Sigmoid colon (tissue), 7 donors: ENCODE measurements at regions of chr4 and their contacts with region 1.

Region 1: GRCh38 chr4:105471566-105472176 is 2.2 kb downstream of the PPA2 start:
- DNase-seq: peak; percentile 82
- H3K4me3 ChIP-seq: peak overlapping the region in 3 of 4 donors; percentile 9 to 98 (median 78)
- H3K27ac ChIP-seq: peak overlapping the region; percentile 96 to 100 (median 99)
- H3K4me1 ChIP-seq: peaks cover 0 to 42% (median 24%) of the 10 kb centered on the region in 4 donors
- H3K27me3 ChIP-seq: no peaks in the 10 kb centered on the region
- CTCF ChIP-seq: peak; percentile 51 to 80 (median 70)
- EP300 ChIP-seq: no peak
- POLR2A ChIP-seq: no peak

Region 2: DNA sequence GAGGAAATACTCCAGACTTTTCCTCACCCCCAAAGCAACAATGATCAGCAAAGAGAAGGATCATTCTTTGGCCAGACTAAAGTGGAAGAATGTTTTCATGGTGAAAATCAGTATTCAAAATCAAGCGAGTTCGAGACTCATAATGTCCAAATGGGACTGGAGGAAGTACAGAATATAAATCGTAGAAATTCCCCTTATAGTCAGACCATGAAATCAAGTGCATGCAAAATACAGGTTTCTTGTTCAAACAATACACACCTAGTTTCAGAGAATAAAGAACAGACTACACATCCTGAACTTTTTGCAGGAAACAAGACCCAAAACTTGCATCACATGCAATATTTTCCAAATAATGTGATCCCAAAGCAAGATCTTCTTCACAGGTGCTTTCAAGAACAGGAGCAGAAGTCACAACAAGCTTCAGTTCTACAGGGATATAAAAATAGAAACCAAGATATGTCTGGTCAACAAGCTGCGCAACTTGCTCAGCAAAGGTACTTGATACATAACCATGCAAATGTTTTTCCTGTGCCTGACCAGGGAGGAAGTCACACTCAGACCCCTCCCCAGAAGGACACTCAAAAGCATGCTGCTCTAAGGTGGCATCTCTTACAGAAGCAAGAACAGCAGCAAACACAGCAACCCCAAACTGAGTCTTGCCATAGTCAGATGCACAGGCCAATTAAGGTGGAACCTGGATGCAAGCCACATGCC is 235.3 kb before region 1 on chr4:
- intact Hi-C with region 1: no loop called
- DNase-seq: no peak
- H3K4me3 ChIP-seq: no peak overlapping the region
- H3K27ac ChIP-seq: no peak overlapping the region
- H3K4me1 ChIP-seq: peaks cover 0 to 11% (median 8%) of the 10 kb centered on the region in 4 donors
- H3K27me3 ChIP-seq: no peaks in the 10 kb centered on the region
- CTCF ChIP-seq: no peak
- EP300 ChIP-seq: no peak
- POLR2A ChIP-seq: no peak

Region 3: DNA sequence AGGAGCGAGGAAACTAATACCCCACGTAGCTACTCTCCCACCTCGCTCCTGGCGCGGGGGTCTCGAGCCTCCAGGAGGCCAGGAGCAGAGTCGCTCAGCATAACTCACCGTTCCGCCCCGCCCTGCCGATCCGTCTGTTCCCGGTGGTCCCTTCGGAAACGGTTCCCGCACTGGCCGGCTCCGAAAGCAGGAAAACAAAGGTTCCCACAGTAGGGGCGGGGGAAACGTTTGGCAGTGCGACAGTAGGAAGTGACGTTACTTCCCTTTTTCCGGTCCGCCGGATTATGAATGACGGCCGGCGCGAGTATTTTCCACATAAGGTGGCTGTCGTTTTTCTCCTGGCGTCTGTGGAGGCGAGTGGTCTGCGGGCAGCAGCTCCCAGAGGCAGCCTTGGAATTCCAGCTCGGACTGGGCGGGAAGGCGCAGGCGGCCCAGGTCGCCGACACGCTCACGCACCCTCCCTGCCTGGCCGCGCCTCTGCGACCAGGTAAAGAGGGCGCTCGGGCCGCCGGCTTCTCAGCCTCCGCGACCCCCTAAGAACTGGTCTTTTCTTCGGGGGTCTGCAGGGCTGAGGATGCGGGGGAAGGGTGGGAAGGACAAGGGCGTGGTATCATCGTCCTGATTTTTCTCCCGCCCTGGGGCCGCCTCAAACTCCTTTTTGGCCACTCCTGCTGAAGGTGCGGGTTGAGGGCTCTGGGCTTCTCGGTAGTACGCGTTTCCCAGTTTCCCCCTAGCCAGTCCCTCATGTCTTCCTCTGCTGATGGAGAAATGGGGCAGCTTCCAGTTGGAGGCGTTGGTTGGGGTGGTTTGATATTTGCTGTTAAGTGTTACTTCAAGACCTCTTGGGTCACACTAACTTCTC is 237.1 kb after region 1 on chr4 and contains the starts of genes GSTCD and INTS12:
- intact Hi-C with region 1: loop called (anchors 5 kb)
- DNase-seq: peak; percentile 95
- H3K4me3 ChIP-seq: peak within 1 kb of the TSS; percentile 78 to 89 (median 84)
- H3K27ac ChIP-seq: peak within 1 kb of the TSS; percentile 84 to 95 (median 86)
- H3K4me1 ChIP-seq: peaks cover 2 to 23% (median 19%) of the 10 kb centered on the region in 4 donors
- H3K27me3 ChIP-seq: no peaks in the 10 kb centered on the region
- CTCF ChIP-seq: no peak
- EP300 ChIP-seq: no peak
- POLR2A ChIP-seq: peak; percentile 24 to 39
- total RNA-seq, gene GSTCD: 5.8 to 16.4 (median 7.7) TPM
- total RNA-seq, gene INTS12: 21.0 to 25.2 (median 22.8) TPM